ENCODE measurements at regions of chr9 and their contacts with region 1.

Region 1: DNA sequence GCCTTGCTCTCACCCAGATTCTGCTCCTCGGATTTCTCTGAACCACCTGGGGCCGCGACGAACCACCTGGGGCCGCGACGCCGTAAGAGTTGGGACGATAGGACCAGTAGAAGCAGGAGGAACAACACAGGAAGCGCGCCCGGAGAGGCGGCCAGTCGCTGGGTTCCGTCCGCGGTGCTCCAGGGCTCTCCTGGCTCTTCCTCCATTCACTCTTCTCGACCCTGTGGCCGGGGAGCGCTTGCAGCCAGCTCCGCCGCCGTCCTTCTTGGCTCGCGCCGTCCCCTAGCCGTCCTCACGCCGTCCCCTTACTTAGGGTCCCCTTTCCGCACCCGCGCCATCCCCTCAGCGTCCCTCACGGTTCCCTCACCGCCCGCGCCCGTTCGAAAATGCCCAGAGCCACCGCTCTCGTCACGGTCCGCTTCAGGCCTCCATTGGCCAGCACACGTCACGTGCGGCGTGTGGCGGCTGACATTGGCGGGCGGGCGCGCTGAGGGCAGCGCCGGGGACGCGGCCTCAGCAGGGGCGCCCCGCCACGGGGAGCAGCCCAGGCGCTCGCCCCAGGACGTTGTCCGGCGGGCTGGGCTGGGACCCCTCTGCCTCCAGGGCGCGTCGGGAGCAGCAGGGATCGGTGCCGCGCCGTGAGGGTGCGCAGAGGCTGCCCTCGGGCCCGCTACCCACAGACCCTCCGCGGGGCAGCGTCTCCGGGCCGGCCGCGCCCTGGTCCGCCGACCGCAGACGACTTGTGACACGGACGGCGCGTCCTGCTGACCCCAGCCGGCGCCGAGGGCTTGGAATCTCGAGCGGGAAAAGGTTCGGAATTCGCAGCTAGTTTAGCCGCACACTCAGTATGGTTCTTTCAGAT is 53.7 kb upstream of the PTPDC1 start:
- DNase-seq: peak; percentile 79
- ATAC-seq: peak; percentile 100
- H3K4me3 ChIP-seq: peak overlapping the region; percentile 93
- H3K27ac ChIP-seq: peak overlapping the region; percentile 73
- H3K4me1 ChIP-seq: no peaks in the 10 kb centered on the region
- H3K27me3 ChIP-seq: no peaks in the 10 kb centered on the region
- CTCF ChIP-seq: no peak
- POLR2A ChIP-seq: peak; percentile 40; the same call in 1 of the 2 replicates
- RAD21 ChIP-seq: no peak

Region 2: GRCh38 chr9:92512622-92513021 is 1517.9 kb before region 1 on chr9:
- CTCF ChIA-PET with region 1: no interaction called
- POLR2A ChIA-PET with region 1: no interaction called
- dilution Hi-C with region 1: no loop called
- in situ Hi-C with region 1: no loop called
- intact Hi-C with region 1: loop called (anchors 10 kb)
- DNase-seq: peak; percentile 52
- ATAC-seq: peak; percentile 84
- H3K4me3 ChIP-seq: no peak overlapping the region
- H3K27ac ChIP-seq: no peak overlapping the region
- H3K4me1 ChIP-seq: peaks cover 16% of the 10 kb centered on the region
- H3K27me3 ChIP-seq: no peaks in the 10 kb centered on the region
- CTCF ChIP-seq: no peak
- POLR2A ChIP-seq: no peak
- RAD21 ChIP-seq: no peak

Region 3: DNA sequence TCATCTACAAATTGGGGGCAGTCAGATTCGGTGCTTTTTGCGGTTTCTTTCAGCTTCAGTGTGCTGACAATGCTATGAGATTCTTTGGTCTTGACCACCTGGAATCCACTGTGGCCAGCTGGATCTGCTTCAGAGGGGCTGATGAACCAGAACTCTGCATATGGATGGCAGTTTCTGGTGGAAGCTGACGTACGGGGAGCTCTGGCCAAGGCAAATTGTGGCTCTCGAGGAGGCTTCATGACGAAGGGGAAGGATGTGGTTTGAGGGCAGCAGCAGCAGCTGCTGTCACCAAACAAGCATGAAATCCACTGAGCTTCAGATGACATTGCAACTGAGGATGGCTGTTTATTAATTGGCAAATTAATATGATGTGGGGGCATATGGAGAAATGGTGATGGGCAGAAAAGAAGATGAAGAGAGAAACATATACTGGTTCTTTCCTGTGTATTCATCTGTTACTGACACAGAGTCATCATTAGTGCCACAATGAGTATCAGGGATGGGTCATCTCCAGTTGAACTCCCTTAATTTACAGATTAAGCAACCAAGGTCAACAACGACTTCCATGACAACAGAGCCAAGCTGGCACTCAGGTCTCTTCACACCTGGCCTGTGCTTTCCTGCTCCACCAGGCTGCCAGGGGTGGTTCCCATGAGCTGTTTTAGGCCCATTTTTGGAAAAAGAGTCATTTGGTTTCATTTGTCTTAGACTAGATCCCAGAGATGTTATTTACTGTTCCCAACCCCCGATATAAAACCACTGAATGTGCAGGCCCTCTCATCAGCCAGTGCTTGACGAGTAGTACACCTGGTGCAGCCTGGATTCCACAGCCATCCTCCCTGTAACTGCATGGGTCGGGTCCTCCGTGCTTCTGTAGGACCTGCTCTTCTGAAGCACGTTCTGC is 830.7 kb after region 1 on chr9:
- CTCF ChIA-PET with region 1: no interaction called
- POLR2A ChIA-PET with region 1: no interaction called
- dilution Hi-C with region 1: no loop called
- in situ Hi-C with region 1: no loop called
- intact Hi-C with region 1: no loop called
- DNase-seq: peak; percentile 89
- ATAC-seq: no peak
- H3K4me3 ChIP-seq: no peak overlapping the region
- H3K27ac ChIP-seq: peak overlapping the region; percentile 34; the same call in 1 of the 2 replicates
- H3K4me1 ChIP-seq: peaks cover 20% of the 10 kb centered on the region
- H3K27me3 ChIP-seq: no peaks in the 10 kb centered on the region
- CTCF ChIP-seq: no peak
- POLR2A ChIP-seq: no peak
- RAD21 ChIP-seq: no peak

Measured in IMR-90 (cell line).